PC-3 (cell line): ENCODE measurements at regions of chr6 and their contacts with region 1.

Region 1: DNA sequence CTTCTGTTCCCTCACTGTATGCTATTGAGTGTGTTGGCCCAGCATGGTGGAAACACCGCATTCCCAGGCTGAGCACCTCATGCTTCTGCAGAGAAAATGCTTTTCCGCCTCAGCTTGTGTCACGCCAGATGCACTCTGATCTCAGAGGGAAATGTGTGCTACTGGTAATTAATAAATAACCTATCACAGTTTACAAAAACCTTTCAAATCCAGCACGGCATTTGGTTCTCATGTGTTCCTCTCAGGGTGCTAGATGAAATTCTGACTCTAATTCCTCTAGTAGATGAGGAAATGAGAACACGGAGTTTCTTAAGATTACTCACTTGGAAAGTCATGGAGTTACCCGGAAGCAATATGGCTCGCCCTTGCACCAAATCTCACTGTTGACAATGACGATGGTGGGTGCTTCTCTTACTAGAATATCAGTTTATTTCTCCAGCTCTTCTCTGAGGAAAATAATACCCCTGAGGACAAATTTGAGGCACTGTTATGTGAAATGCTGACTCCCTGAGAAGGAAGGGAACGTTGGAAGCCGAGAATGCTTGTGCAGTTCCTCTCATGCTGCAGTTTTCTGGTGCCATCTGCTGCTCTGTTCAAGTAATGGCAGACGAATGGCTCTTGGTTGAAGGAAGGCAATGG is 116.6 kb downstream of the RNF144B start:
- DNase-seq: peak; percentile 81
- ATAC-seq: peak; percentile 92
- H3K4me3 ChIP-seq: peak overlapping the region; percentile 58
- H3K27ac ChIP-seq: peak overlapping the region; percentile 9; the same call in 1 of the 2 replicates
- H3K4me1 ChIP-seq: peaks cover 6% of the 10 kb centered on the region; the same call in 1 of the 2 replicates
- H3K27me3 ChIP-seq: no peaks in the 10 kb centered on the region
- CTCF ChIP-seq: peak; percentile 98

Region 2: DNA sequence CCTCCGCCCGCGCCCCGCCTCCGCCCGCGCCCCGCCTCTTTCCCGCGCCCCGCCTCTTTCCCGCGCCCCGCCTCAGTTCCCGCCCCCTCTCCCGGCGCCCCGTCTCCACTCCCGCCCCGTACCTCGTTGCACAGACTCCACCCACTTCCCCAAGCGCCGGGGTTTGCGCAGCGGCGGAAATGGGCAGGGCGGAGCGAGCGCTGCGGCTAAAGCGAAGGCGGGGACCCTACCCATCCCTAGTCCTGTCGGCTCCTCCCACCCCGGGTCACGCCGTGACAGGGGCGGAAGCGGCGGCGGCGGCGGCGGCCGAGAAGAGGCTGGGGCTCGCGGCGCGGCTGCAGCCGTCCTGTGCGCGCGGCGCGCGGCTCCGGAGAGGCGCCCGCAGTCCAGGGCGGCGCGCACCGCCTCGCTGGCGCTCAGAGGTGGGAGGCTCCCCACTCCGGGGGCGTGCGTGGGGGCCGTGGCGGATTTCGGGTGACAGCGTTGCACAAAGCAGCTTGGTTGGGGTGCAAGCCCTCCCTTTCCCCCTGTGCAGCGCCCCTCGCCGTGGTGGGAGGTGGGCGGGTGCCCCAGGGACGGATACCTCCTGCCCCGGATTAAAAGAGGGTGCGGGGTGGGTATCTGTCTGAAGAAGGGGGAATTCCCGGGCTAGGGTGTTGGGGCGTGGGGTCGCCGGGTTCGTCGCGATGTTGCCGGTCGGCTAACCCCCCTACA is 348.4 kb before region 1 on chr6 and contains the start of gene KDM1B:
- CTCF ChIA-PET with region 1: no interaction called
- POLR2A ChIA-PET with region 1: no interaction called
- intact Hi-C with region 1: loop called (anchors 5 kb)
- DNase-seq: peak; percentile 97
- ATAC-seq: peak; percentile 91
- H3K4me3 ChIP-seq: peak within 1 kb of the TSS; percentile 93
- H3K27ac ChIP-seq: peak within 1 kb of the TSS; percentile 52
- H3K4me1 ChIP-seq: peaks cover 20% of the 10 kb centered on the region
- H3K27me3 ChIP-seq: no peaks in the 10 kb centered on the region
- CTCF ChIP-seq: no peak
- total RNA-seq, gene KDM1B: 25.0 and 31.1 TPM in 2 replicates

Region 3: DNA sequence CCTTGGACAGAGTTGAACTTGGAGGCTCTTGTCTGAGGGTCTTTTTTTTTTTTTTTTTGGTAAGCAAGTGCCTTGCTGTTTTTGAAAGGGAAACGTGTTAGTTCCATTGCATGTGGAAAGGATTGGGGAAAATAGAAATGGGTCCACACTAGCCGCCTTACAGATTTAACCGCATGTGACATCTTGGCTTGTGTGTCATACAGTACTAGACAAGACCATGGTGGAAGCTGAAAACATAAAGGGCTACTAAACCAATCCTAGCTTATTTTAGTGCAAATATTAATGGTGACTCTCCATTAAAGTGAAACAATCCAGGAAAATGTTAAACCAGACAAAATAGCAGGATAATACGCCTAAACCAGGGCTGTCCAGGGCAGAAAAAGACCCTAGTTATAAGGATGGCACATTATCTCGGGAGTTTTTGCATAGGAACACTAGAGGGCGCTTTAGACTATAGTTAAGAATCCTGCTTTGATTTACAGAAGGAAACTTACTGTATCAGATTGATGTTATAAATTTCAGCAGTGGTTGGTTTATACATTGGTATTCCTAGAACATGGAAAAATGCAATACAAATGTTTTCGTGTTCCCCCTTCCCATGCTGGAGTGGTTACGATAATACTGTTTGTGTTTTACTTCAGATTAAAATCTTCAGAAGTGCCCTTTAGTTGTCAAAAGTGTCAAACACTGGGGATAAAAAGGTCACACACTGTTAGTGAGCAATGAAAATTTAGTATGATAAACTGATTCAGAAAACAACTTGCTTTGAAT is 179.6 kb before region 1 on chr6:
- CTCF ChIA-PET with region 1: interaction called, 9 read pairs
- POLR2A ChIA-PET with region 1: no interaction called
- intact Hi-C with region 1: loop called (anchors 1 kb)
- DNase-seq: peak; percentile 78
- ATAC-seq: peak; percentile 72
- H3K4me3 ChIP-seq: no peak overlapping the region
- H3K27ac ChIP-seq: no peak overlapping the region
- H3K4me1 ChIP-seq: peaks cover 11% of the 10 kb centered on the region
- H3K27me3 ChIP-seq: no peaks in the 10 kb centered on the region
- CTCF ChIP-seq: peak; percentile 86

Region 4: DNA sequence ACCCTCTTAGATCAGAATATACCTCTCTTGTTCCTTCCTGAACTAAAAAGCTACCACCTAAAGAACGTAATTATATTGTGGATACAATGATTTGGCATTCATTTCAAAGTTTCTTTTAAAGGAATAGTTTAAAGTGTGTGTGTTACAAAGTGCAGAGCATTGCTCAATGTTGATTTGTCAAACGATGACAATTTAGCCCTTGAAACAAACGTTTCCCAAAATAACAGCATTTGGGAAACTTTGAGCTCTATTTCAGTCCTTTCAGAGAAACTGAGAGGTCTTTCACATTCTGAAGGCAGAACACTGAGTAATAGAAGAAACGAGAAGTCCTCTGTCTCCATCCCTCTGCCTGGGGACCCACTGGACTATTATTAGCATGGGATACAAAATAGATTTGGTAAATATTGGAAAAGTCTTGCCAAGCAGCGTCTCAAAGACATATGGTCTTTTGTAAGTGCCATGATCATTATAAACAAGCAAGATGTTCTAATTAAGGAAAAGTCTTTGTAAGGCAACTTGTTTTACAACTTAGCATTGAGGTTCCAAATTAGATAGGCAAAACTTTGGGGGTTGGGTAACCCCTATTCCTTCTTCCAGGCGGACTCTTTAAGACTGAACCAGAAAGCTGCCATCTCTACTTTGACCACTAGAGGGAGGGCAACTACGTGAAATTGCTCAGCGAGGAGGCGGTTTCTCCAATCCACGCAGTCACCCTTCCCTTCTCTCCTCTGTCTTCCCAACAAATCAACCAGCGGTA is 92.2 kb after region 1 on chr6:
- CTCF ChIA-PET with region 1: no interaction called
- POLR2A ChIA-PET with region 1: no interaction called
- intact Hi-C with region 1: no loop called
- DNase-seq: peak; percentile 85
- ATAC-seq: peak; percentile 86
- H3K4me3 ChIP-seq: no peak overlapping the region
- H3K27ac ChIP-seq: no peak overlapping the region
- H3K4me1 ChIP-seq: no peaks in the 10 kb centered on the region
- H3K27me3 ChIP-seq: peaks cover 35% of the 10 kb centered on the region
- CTCF ChIP-seq: peak; percentile 96